Activated CD4-positive, alpha-beta T cell treated with anti-CD3 and anti-CD28 coated beads for 36 hours (primary cell): ENCODE measurements at regions of chr3 and their contacts with region 1.

Region 1: GRCh38 chr3:187974871-187975271 is 179.1 kb upstream of the LPP start:
- DNase-seq: no peak
- ATAC-seq: peak; percentile 61
- H3K4me3 Mint-ChIP-seq: peak overlapping the region; percentile 57
- H3K27ac Mint-ChIP-seq: peak overlapping the region; percentile 90
- H3K4me1 Mint-ChIP-seq: peaks cover 57% of the 10 kb centered on the region
- H3K27me3 Mint-ChIP-seq: no peaks in the 10 kb centered on the region

Region 2: DNA sequence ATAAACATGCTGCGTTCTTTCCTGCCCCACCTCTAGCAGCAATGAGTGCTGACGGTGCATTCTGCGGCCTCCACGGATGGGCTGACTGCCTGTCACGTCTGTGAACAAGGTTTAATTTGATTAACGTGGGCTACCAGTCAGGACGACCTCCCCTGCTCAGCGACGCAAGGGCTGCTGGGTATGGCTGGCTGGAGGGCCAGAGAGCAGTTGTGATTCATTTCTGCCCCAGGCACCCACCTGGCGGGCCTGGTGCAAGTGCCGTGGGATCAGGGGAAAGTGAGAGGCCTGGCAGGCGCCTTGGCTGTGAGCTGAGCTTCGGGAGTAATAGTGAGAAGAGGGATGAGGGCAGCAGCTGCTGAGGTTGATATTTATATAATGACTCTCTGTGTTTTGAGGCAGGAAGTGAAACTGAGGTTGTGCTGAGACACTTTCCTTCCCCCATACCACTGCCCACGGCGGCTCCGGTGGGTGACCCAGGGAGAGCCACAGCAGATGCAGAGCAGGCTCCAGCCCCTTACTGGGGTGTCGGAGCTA is 39.2 kb before region 1 on chr3:
- CTCF ChIA-PET with region 1: interaction called, 13 read pairs
- POLR2A ChIA-PET with region 1: interaction called, 7 read pairs
- intact Hi-C with region 1: loop called in 1 of 2 experiments (anchors 2 kb)
- DNase-seq: peak; percentile 67
- ATAC-seq: peak; percentile 91
- H3K4me3 Mint-ChIP-seq: no peak overlapping the region
- H3K27ac Mint-ChIP-seq: peak overlapping the region; percentile 62
- H3K4me1 Mint-ChIP-seq: peaks cover 22% of the 10 kb centered on the region
- H3K27me3 Mint-ChIP-seq: peaks cover 6% of the 10 kb centered on the region

Region 3: GRCh38 chr3:188061133-188061532 is 86.3 kb after region 1 on chr3:
- CTCF ChIA-PET with region 1: no interaction called
- POLR2A ChIA-PET with region 1: no interaction called
- intact Hi-C with region 1: loop called in 1 of 2 experiments (anchors 1 kb)
- DNase-seq: peak; percentile 76
- ATAC-seq: peak; percentile 98
- H3K4me3 Mint-ChIP-seq: peak overlapping the region; percentile 25
- H3K27ac Mint-ChIP-seq: peak overlapping the region; percentile 77
- H3K4me1 Mint-ChIP-seq: peaks cover 35% of the 10 kb centered on the region
- H3K27me3 Mint-ChIP-seq: no peaks in the 10 kb centered on the region

Region 4: DNA sequence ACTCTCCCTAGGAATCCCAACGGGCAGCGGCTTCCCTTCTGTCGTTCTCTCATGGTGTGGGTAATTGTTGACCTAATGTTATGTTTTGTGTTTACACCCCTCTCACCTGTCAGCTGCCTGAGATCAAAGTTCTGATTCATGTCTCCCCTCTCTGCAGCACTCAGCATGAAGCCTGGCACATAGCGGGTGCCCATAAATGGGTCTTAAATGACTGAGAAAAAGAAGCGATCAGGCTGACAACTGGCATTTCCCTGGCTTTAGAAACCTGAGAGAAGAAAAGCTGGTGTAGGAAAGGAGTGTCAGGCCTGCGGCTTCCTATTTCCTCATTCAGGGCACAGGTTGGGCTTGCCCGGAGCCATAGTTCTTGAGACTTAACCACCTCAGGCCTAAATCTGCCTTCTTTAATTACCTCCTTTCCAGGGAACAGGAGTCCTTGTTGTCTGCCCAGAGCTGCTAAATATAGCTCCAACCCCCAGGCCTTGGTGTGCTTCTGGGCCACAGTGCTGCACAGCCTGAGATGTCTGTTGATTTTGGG is 210.9 kb after region 1 on chr3:
- CTCF ChIA-PET with region 1: no interaction called
- POLR2A ChIA-PET with region 1: no interaction called
- intact Hi-C with region 1: no loop called
- DNase-seq: peak; percentile 33
- ATAC-seq: peak; percentile 60
- H3K4me3 Mint-ChIP-seq: no peak overlapping the region
- H3K27ac Mint-ChIP-seq: no peak overlapping the region
- H3K4me1 Mint-ChIP-seq: peaks cover 47% of the 10 kb centered on the region
- H3K27me3 Mint-ChIP-seq: no peaks in the 10 kb centered on the region

Region 5: DNA sequence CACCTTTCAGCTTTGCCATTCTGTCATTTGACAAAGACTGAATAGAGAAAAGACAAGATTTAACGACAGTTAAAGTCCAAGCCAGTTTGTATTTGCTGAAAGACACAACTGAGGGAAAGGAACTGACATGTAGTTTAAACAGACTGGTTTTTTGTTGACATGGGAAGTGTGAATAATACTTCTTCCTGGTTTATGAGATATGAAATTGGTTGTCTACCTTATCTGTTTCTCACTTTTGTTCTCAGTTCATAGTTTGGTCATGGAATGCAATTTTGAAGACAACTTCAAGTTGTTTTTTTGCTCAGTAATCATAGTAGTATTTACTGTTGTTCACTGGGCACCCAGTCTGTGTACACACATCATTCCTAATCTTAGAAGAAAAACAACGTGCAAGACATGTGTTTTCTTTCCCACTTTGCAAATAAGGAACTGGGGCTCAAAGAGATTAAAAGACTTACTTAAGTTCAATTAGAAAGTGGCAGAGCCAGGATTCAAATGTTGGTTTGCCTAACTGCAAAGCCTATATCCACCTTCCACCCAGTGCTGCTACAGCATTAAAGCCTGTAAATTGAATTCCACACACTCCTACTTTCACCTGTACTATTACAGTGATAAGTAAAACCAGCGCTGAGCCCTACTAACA is 282.6 kb after region 1 on chr3:
- CTCF ChIA-PET with region 1: no interaction called
- POLR2A ChIA-PET with region 1: no interaction called
- intact Hi-C with region 1: loop called in 1 of 2 experiments (anchors 5 kb)
- DNase-seq: no peak
- ATAC-seq: peak; percentile 12
- H3K4me3 Mint-ChIP-seq: no peak overlapping the region
- H3K27ac Mint-ChIP-seq: peak overlapping the region; percentile 62
- H3K4me1 Mint-ChIP-seq: peaks cover 46% of the 10 kb centered on the region
- H3K27me3 Mint-ChIP-seq: no peaks in the 10 kb centered on the region

Region 6: DNA sequence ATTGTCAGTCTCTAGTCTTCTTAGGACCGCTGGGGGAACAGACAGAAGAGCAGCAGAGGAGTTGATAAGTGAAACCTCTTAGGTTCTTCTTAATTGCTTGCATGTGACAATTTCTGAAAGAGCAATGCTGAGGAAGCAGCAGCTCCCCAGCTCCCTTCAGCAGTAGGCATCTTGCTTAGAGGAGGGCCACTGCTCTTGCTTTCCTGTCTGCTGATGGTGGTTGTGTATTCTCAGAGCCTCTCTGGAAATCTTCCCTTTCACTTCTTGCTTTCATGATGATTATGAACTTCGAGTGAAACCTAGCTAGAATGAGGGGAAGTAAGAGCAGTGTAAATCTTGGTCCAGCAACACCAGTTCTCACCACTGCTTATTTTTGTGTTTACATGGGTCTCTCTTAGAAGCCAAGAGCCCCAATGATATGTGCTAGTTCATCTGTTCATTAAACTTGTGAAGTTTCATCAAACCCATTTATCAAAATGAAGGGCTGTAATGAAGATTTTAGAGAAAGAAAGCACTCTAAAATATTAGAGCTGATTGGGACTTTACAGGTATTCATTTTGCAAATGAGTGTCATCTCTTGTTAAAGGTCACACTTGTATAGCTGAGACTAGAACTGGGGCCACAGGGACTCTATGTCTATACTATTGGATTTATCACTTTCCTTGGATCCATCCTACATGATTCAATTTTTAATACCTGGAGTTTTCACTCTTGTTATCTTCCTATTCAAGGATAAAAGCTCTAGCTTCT is 425.8 kb after region 1 on chr3:
- CTCF ChIA-PET with region 1: no interaction called
- POLR2A ChIA-PET with region 1: no interaction called
- intact Hi-C with region 1: loop called in 1 of 2 experiments (anchors 5 kb)
- DNase-seq: peak; percentile 46
- ATAC-seq: peak; percentile 85
- H3K4me3 Mint-ChIP-seq: no peak overlapping the region
- H3K27ac Mint-ChIP-seq: peak overlapping the region; percentile 26
- H3K4me1 Mint-ChIP-seq: peaks cover 69% of the 10 kb centered on the region
- H3K27me3 Mint-ChIP-seq: no peaks in the 10 kb centered on the region